Activated CD4-positive, alpha-beta T cell treated with anti-CD3 and anti-CD28 coated beads for 36 hours (primary cell): ENCODE measurements at regions of chr5 and their contacts with region 1.

Region 1: DNA sequence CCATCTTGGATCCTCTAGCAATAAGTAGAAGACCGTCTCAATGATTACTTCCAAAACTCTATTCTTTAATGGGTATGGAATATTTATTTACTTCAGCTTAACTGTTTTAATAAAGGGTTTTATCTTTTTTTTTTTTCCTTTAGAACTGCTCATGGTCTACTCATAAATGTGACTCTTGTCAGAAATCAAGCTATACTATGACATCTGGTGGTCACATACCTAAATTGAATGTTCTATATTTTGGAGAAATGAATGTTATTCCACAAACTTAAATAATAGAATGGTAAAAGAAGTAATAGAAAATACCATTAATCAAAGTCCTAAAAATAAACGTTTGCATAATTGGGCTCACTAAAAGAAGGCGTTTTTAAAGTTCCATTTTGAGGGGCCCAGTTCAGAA is 131.2 kb upstream of the PLCXD3 start:
- DNase-seq: no peak
- ATAC-seq: no peak
- H3K4me3 Mint-ChIP-seq: no peak overlapping the region
- H3K27ac Mint-ChIP-seq: no peak overlapping the region
- H3K4me1 Mint-ChIP-seq: no peaks in the 10 kb centered on the region
- H3K27me3 Mint-ChIP-seq: peaks cover 4% of the 10 kb centered on the region

Region 2: DNA sequence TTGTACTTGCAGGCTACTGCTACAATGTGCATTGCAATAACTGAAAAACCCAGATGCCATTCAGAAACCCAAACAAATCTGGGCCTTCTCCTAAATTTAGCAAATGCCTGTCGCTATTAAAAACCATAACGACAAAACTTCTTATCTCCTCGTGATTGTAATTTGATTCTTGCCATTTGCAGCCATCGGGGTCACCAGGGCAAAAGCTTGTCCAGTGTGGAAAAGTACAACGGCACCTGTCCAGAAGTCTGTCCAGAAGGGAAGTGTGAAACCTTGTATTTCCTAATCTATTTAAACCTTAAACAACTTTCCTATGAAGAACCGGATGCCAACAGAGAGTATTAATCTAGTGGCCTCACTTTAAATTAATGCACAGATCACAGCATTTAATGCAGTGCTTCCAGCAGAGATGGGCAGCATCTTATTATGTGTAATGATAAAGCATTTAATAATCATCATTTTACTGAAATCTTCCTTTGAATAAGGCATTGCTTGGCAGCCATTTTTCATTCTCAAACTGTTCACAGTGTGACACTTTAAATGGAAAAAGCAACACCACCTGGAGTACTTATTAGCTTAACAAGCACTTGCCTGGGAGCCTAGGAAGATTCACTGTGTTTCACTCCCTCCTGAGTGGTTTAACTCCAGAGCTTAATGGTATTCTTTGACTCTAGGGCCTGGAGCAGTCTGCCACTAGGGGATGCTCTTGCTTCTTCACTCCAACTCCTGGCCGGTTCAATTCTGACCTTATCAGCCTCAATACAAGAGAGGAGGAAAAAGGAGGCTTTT is 737.2 kb before region 1 on chr5:
- CTCF ChIA-PET with region 1: interaction called, 3 read pairs
- POLR2A ChIA-PET with region 1: no interaction called
- intact Hi-C with region 1: loop called in 1 of 2 experiments (anchors 10 kb)
- DNase-seq: peak; percentile 60
- ATAC-seq: peak; percentile 74
- H3K4me3 Mint-ChIP-seq: no peak overlapping the region
- H3K27ac Mint-ChIP-seq: no peak overlapping the region
- H3K4me1 Mint-ChIP-seq: no peaks in the 10 kb centered on the region
- H3K27me3 Mint-ChIP-seq: no peaks in the 10 kb centered on the region